ENCODE measurements at regions of chr6 and their contacts with region 1.

Region 1: DNA sequence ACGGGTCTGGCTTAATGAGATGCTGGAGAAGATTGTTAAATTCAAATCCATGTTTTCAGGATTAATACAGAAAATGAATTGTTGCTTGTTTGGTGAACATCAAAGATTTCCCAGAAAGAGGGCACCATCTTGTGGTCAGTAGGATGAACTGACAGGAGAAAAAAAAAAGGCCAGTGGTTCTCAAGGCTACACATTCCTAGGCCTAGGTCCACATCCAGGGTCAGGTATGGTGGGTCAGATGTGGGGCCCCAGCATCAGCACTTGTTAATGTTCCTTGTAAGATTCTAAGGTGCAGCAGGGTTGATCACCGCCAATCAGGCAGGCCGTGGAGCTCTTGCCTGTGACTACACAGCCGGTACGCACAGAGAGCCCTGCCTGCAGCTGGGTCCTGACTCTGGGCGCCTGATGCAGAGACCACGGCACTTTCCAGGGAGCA is 34.0 kb upstream of the FOXO3 start:
- DNase-seq: no peak
- ATAC-seq: peak in 7 of 8 donors; percentile 23 to 59 (median 52)
- H3K4me3 ChIP-seq: no peak overlapping the region
- H3K27ac ChIP-seq: no peak overlapping the region
- H3K4me1 ChIP-seq: no peaks in the 10 kb centered on the region
- H3K27me3 ChIP-seq: no peaks in the 10 kb centered on the region
- CTCF ChIP-seq: peak; percentile 57 to 87 (median 83)

Region 2: GRCh38 chr6:107977283-107977682 is 549.5 kb before region 1 on chr6:
- intact Hi-C with region 1: loop called in 9 of 10 experiments (anchors 2 to 10 kb)
- DNase-seq: no peak
- ATAC-seq: no peak
- H3K4me3 ChIP-seq: no peak overlapping the region
- H3K27ac ChIP-seq: no peak overlapping the region
- H3K4me1 ChIP-seq: no peaks in the 10 kb centered on the region
- H3K27me3 ChIP-seq: no peaks in the 10 kb centered on the region
- CTCF ChIP-seq: peak in 7 of 9 donors; percentile 26 to 52 (median 39)

Region 3: DNA sequence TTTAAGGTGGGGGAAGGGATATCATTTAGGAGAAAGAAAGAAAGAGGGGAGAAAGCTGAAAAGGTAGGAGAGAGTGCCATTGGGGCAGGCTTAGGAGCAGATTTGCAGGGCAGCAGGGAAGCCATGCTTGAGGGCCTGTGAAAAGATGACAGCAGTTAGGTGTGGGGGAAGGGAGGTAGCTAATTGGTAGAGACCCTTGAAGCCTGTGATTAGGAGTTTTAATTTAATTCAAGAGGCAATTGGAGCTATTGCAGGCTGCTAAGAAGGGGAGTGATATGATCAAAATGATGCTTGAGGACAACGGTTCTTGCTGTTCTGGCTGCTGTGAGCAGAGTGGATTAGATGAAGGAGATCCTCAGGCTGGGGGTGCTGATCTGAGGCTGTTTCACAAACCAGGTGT is 544.3 kb before region 1 on chr6:
- intact Hi-C with region 1: loop called in 9 of 10 experiments (anchors 2 to 10 kb)
- DNase-seq: no peak
- ATAC-seq: no peak
- H3K4me3 ChIP-seq: no peak overlapping the region
- H3K27ac ChIP-seq: no peak overlapping the region
- H3K4me1 ChIP-seq: no peaks in the 10 kb centered on the region
- H3K27me3 ChIP-seq: peaks cover 0 to 5% (median 0%) of the 10 kb centered on the region in 7 donors
- CTCF ChIP-seq: no peak

Region 4: DNA sequence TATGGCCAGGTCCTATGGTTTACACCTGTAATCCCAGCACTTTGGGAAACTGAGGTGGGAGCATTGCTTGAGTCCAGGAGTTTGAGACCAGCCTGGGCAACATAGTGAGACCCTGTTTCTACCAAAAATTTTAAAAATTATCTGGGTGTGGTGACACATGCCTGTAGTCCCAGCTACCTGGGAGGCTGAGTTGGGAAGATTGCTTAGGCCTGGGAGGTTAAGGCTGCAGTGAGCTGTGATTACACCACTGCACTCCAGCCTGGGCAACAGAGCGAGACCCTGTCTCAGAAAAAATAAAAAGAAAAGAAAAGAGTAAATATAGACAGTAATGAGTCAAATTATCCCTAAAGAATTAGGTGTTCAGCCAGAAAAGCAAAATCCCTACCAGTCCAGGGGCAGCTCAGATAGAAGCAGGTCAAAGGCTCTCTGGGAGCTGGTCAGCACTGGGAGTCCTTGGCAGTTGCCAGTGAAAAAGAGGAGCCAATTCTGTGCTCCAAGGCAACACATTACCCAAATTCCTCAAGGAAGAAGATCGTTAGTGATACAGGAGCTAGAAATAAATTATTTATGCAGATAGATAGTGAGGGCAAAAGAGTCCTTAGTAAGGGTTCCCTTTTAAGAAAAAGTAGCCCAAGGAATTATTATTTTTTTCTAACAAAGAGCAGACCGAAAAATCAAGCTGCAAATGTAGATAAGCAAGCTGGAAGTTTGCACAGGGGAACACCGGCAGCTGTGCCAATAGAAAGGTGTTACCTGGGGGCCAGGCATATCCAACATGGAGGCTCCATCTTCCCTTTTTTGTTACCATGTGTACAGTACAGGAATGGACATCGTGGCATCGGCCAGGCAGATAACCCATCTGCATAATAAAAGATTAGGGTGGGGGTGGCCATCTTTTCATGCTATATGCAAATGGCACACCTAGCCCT is 537.3 kb before region 1 on chr6:
- intact Hi-C with region 1: loop called in 4 of 10 experiments (anchors 5 to 10 kb)
- DNase-seq: no peak
- ATAC-seq: no peak
- H3K4me3 ChIP-seq: no peak overlapping the region
- H3K27ac ChIP-seq: no peak overlapping the region
- H3K4me1 ChIP-seq: no peaks in the 10 kb centered on the region
- H3K27me3 ChIP-seq: peaks cover 0 to 6% (median 0%) of the 10 kb centered on the region in 7 donors
- CTCF ChIP-seq: no peak

Region 5: GRCh38 chr6:108113557-108114519 is 412.9 kb before region 1 on chr6:
- intact Hi-C with region 1: loop called (anchors 1 to 10 kb)
- DNase-seq: peak in 1 of 2 donors; percentile 39
- ATAC-seq: peak in 7 of 8 donors; percentile 30 to 55 (median 46)
- H3K4me3 ChIP-seq: peak overlapping the region in 6 of 10 donors; percentile 13 to 57 (median 48)
- H3K27ac ChIP-seq: no peak overlapping the region
- H3K4me1 ChIP-seq: peaks cover 12 to 47% (median 41%) of the 10 kb centered on the region in 9 donors
- H3K27me3 ChIP-seq: peaks cover 16 to 98% (median 90%) of the 10 kb centered on the region in 7 donors
- CTCF ChIP-seq: peak in 8 of 9 donors; percentile 29 to 66 (median 54)